AG04450 (cell line): ENCODE measurements at regions of chr10 and their contacts with region 1.

Region 1: GRCh38 chr10:99711129-99711719 is 20.7 kb downstream of the COX15 start:
- DNase-seq: peak; percentile 55
- H3K4me3 ChIP-seq: no peak overlapping the region
- H3K27ac ChIP-seq: no peak overlapping the region
- H3K27me3 ChIP-seq: no peaks in the 10 kb centered on the region
- CTCF ChIP-seq: peak; percentile 69

Region 2: GRCh38 chr10:99560277-99561126 is 150.7 kb before region 1 on chr10:
- CTCF ChIA-PET with region 1: interaction called, 11 read pairs
- POLR2A ChIA-PET with region 1: no interaction called
- DNase-seq: no peak
- H3K4me3 ChIP-seq: no peak overlapping the region
- H3K27ac ChIP-seq: no peak overlapping the region
- H3K27me3 ChIP-seq: peaks cover 11% of the 10 kb centered on the region
- CTCF ChIP-seq: peak; percentile 69

Region 3: GRCh38 chr10:99612167-99612831 is 98.9 kb before region 1 on chr10:
- CTCF ChIA-PET with region 1: interaction called, 46 read pairs
- POLR2A ChIA-PET with region 1: no interaction called
- DNase-seq: peak; percentile 13
- H3K4me3 ChIP-seq: no peak overlapping the region
- H3K27ac ChIP-seq: no peak overlapping the region
- H3K27me3 ChIP-seq: no peaks in the 10 kb centered on the region
- CTCF ChIP-seq: peak; percentile 89

Region 4: DNA sequence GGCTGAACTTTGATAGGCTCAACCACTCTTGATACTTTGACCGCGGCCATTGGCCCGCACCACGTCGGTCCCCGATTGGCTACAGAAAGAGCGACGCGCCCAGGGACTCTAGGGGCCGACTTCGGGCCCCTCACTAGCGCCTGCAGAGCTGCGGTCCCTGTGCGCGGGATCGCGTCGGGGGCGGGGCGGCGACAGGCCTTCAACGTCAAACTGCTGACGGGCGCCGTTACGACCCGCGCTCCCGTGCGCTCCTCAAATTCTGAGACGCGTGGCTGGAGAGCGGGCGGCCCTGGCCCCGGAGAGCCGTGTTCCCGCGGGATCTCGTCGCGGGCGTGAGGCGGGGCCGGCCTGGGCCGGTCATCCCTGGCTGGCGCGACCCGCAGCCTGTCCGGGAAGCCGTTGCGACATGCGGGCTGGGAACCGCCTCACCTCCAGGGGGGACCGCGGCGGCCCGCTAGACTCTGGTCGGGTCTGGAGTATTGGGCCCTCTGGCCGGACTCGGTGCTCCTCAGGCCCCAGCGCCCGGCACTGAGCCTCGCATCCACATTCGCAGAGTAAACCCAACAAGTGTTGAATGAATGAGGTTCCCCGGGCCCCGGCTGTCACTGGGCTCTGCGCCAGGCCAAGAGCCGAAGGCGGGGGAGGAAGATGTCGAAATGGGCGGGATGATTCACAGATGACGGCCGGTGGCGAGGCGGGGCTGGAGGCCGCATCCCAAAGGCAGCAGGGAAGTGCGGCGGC is 90.3 kb before region 1 on chr10:
- CTCF ChIA-PET with region 1: interaction called, 46 read pairs
- POLR2A ChIA-PET with region 1: interaction called, 6 read pairs
- DNase-seq: peak; percentile 85
- H3K4me3 ChIP-seq: peak overlapping the region; percentile 71
- H3K27ac ChIP-seq: peak overlapping the region; percentile 99
- H3K27me3 ChIP-seq: no peaks in the 10 kb centered on the region
- CTCF ChIP-seq: no peak

Region 5: GRCh38 chr10:99630439-99630838 is 80.8 kb before region 1 on chr10:
- CTCF ChIA-PET with region 1: interaction called, 47 read pairs
- POLR2A ChIA-PET with region 1: no interaction called
- DNase-seq: peak; percentile 20
- H3K4me3 ChIP-seq: no peak overlapping the region
- H3K27ac ChIP-seq: no peak overlapping the region
- H3K27me3 ChIP-seq: peaks cover 3% of the 10 kb centered on the region
- CTCF ChIP-seq: peak; percentile 59

Region 6: DNA sequence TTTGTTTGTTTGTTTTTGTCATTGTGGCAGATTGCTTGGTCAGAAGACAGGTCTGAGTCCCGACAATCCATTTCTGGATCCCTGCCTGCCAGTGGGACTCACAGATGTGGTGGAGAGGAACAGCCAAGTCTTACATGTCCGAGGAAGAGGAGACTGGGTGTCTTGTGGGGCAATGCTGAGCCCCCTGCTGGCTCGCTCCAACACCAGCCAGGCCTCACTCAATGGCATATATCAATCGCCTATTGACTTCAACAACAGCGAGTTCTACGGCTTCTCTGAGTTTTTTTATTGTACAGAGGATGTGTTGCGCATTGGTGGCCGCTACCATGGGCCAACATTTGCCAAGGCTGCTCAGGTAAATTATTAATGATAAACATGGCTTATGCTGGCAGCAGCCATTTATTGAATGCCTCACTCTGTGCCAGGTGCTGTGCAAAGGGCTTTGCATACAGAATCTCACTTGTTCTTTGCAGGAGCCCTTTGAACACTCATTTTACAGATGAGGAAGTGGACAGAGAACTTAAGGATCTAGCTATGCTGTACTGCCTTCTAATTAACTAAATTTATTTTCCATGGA is 12.6 kb before region 1 on chr10:
- CTCF ChIA-PET with region 1: interaction called, 22 read pairs
- POLR2A ChIA-PET with region 1: interaction called, 5 read pairs
- DNase-seq: no peak
- H3K4me3 ChIP-seq: no peak overlapping the region
- H3K27ac ChIP-seq: no peak overlapping the region
- H3K27me3 ChIP-seq: no peaks in the 10 kb centered on the region
- CTCF ChIP-seq: peak; percentile 8; the same call in 1 of the 2 replicates

Region 7: DNA sequence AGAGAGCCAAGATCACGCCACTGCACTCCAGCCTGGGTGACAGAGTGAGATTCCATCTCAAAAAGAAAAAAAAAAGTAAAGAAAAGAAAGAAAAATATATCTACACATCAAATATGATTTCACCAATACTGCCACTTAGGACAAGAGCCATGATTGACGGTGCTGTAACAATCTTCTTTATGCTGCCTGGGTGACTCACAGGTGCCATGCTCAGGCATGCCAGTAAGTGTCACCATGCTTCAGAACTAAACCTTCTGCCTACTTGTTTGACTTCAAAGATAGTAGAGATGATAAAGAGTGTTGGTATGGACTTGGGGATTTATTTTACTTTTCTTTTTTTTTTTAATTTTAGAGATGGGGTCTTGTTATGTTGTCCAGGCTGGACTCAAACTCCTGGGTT is 332.1 kb after region 1 on chr10:
- CTCF ChIA-PET with region 1: no interaction called
- POLR2A ChIA-PET with region 1: no interaction called
- DNase-seq: no peak
- H3K4me3 ChIP-seq: no peak overlapping the region
- H3K27ac ChIP-seq: peak overlapping the region; percentile 61
- H3K27me3 ChIP-seq: no peaks in the 10 kb centered on the region
- CTCF ChIP-seq: no peak